SK-MEL-5 (cell line): ENCODE measurements at regions of chr7 and their contacts with region 1.

Region 1: DNA sequence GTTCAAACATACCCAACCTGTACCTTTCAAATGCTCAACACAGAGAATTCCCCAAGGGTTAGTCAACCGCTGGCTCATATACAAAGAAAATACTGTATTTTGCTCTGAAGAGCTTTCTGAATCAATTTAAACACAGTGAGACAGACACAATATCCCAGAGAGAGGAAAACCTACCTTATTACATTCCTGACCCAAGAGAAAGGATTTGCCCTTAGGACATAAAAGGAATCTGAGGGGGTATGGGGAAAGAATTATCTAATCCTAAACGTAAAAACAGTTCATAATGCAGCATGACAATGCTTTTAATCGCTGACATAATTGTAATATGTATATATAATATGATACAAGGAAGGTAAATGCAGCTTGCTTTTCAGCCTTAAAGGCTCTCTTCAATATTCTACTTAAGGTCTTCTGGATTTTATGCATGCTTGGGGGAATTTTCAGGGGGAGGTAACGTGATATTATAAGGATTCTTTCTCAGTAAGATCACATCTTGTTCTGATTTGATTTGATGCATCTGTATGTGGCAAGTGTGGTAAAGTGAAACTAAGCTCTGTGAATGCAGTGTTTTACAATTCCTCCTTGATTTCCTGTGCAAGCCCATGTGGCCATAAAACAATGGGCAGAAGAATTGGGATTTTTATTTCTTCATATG is 240.5 kb downstream of the GLI3 start:
- DNase-seq: peak; percentile 33

Region 2: GRCh38 chr7:42380401-42380800 is 383.9 kb after region 1 on chr7:
- in situ Hi-C with region 1: loop called (anchors 10 kb)
- DNase-seq: no peak